Sciatic nerve (tissue), 2 donors: ENCODE measurements at regions of chr12 and their contacts with region 1.

Region 1: GRCh38 chr12:92145731-92146496 is at the start of gene BTG1:
- DNase-seq: peak; percentile 99
- ATAC-seq: peak; percentile 95
- total RNA-seq, gene BTG1: 144 TPM

Region 2: GRCh38 chr12:92078167-92079053 is 67.5 kb before region 1 on chr12:
- intact Hi-C with region 1: no loop called
- DNase-seq: no peak
- ATAC-seq: peak; percentile 92

Region 3: GRCh38 chr12:92505254-92506231 is 359.6 kb after region 1 on chr12:
- intact Hi-C with region 1: loop called (anchors 10 kb)
- DNase-seq: peak; percentile 91
- ATAC-seq: peak; percentile 79